Dendritic cell treated with granulocyte-macrophage colony-stimulating factor and Interleukin-4, amounts not matched to agents 40 ng/mL and 50 ng/mL, for 4 days (primary cell): ENCODE measurements at regions of chr1 and their contacts with region 1.

Region 1: GRCh38 chr1:200738740-200739498 is at the start of gene CAMSAP2:
- H3K4me3 Mint-ChIP-seq: peak within 1 kb of the TSS; percentile 99
- H3K27ac Mint-ChIP-seq: peak within 1 kb of the TSS; percentile 100
- H3K4me1 Mint-ChIP-seq: peaks cover 42% of the 10 kb centered on the region
- H3K27me3 Mint-ChIP-seq: peaks cover 27% of the 10 kb centered on the region

Region 2: GRCh38 chr1:200802865-200803512 is 64.1 kb after region 1 on chr1:
- intact Hi-C with region 1: loop called (anchors 10 kb)
- H3K4me3 Mint-ChIP-seq: no peak overlapping the region
- H3K27ac Mint-ChIP-seq: no peak overlapping the region
- H3K4me1 Mint-ChIP-seq: peaks cover 18% of the 10 kb centered on the region
- H3K27me3 Mint-ChIP-seq: no peaks in the 10 kb centered on the region

Region 3: GRCh38 chr1:200866521-200866920 is 127.6 kb after region 1 on chr1:
- intact Hi-C with region 1: no loop called
- H3K4me3 Mint-ChIP-seq: no peak overlapping the region
- H3K27ac Mint-ChIP-seq: no peak overlapping the region
- H3K4me1 Mint-ChIP-seq: no peaks in the 10 kb centered on the region
- H3K27me3 Mint-ChIP-seq: peaks cover 3% of the 10 kb centered on the region

Region 4: DNA sequence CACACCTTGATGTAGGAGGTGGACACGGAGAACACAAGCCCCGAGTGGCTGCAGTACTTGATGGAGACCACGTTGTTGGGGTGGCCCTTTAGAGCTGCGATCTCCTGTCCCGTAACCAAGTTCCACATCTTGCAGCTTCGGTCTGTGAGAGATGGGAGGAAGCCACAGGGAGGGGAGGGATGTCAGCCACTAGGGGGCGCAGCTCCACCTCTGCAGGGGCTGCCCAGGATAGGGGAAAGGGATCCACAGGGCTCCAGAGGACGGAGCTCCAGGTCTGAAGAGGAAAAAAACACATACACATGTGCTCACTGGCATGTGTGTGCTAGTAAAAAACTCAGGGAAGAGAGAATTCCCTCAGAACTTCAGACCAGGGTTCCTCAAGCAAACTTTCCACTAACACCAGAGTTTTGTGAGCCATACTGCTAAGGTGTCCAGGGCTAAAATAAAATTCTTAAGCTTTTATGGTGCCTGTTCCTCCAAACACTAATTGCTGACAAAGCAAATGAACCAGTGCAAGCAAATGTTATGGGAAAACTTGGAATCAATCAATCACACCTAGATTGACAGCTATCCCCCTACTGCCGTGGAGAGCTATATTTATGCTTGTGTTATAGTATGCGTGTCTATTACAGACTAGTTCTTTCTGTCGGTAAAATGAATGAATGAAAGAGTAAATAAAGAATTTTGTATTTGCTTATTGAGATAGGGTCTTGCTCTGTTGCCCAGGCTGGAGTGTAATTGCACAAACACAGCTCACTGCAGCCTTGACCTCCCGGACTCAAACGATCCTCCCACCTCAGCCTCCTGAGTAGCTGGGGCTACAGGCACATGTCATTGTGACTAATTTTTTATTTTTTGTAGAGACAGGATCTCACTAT is 240.9 kb after region 1 on chr1:
- intact Hi-C with region 1: no loop called
- H3K4me3 Mint-ChIP-seq: no peak overlapping the region
- H3K27ac Mint-ChIP-seq: no peak overlapping the region
- H3K4me1 Mint-ChIP-seq: peaks cover 5% of the 10 kb centered on the region
- H3K27me3 Mint-ChIP-seq: no peaks in the 10 kb centered on the region